GM13977 (cell line): ENCODE measurements at regions of chr11 and their contacts with region 1.

Region 1: GRCh38 chr11:102495161-102496042 is 35.1 kb downstream of the MMP7 start:
- DNase-seq: peak; percentile 51
- CTCF ChIP-seq: peak; percentile 66

Region 2: GRCh38 chr11:102187416-102188151 is 307.8 kb before region 1 on chr11:
- in situ Hi-C with region 1: no loop called
- DNase-seq: no peak
- CTCF ChIP-seq: no peak

Region 3: DNA sequence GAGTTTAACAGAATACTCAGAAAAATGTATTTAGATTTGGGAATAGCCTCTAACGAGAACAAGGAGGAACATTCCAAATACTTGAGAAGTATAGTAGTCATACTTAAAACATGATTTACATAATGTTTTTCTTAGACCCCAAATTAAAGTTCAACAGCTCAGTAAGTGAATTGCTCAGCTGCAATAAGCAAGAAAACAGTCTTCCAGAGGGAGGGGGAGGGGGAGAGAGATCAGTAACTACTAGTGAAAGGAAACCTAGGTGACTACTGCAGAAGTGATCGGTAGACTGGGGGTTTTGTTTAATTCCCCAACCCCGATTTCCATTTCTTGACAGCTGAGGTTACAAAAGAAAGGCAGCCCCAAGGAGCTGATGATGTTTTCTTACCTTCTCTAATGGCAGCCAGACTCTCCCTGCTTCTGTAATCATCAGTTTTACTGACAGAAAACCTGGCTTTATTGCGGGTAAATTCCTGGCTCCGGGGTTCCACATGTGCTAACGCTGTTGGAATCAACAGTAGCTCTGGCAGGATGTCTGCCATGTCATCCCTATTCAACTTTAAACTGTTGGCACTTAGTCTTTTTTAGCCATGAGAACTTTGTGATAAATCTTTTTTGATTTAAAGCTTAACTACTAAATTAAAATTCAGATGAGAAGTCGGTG is 260.5 kb before region 1 on chr11:
- in situ Hi-C with region 1: no loop called
- DNase-seq: no peak
- CTCF ChIP-seq: no peak

Region 4: GRCh38 chr11:102268329-102269193 is 226.8 kb before region 1 on chr11:
- in situ Hi-C with region 1: no loop called
- DNase-seq: peak; percentile 82
- CTCF ChIP-seq: peak; percentile 35

Region 5: GRCh38 chr11:102384419-102385079 is 110.9 kb before region 1 on chr11:
- in situ Hi-C with region 1: loop called (anchors 10 kb)
- DNase-seq: no peak
- CTCF ChIP-seq: no peak

Region 6: GRCh38 chr11:102614485-102614884 is 119.1 kb after region 1 on chr11:
- in situ Hi-C with region 1: loop called (anchors 10 kb)
- DNase-seq: no peak
- CTCF ChIP-seq: peak; percentile 45